Activated CD4-positive, alpha-beta T cell treated with anti-CD3 and anti-CD28 coated beads, Interleukin-2, amount 10 ng/mL, durations not matched to agents 24 days and 14 days (primary cell): ENCODE measurements at regions of chr5 and their contacts with region 1.

Region 1: GRCh38 chr5:76402886-76403765 is at the start of gene IQGAP2:
- DNase-seq: peak; percentile 96
- H3K4me3 Mint-ChIP-seq: peak within 1 kb of the TSS; percentile 95
- H3K27ac Mint-ChIP-seq: peak within 1 kb of the TSS; percentile 99
- H3K4me1 Mint-ChIP-seq: peaks cover 57% of the 10 kb centered on the region
- H3K27me3 Mint-ChIP-seq: peaks cover 7% of the 10 kb centered on the region
- total RNA-seq, gene IQGAP2: 37.3 and 39.3 TPM in 2 replicates

Region 2: GRCh38 chr5:74576941-74577456 is 1826.1 kb before region 1 on chr5:
- intact Hi-C with region 1: loop called (anchors 5 kb)
- DNase-seq: peak; percentile 79
- H3K4me3 Mint-ChIP-seq: peak overlapping the region; percentile 50
- H3K27ac Mint-ChIP-seq: peak overlapping the region; percentile 30
- H3K4me1 Mint-ChIP-seq: peaks cover 35% of the 10 kb centered on the region
- H3K27me3 Mint-ChIP-seq: peaks cover 5% of the 10 kb centered on the region

Region 3: DNA sequence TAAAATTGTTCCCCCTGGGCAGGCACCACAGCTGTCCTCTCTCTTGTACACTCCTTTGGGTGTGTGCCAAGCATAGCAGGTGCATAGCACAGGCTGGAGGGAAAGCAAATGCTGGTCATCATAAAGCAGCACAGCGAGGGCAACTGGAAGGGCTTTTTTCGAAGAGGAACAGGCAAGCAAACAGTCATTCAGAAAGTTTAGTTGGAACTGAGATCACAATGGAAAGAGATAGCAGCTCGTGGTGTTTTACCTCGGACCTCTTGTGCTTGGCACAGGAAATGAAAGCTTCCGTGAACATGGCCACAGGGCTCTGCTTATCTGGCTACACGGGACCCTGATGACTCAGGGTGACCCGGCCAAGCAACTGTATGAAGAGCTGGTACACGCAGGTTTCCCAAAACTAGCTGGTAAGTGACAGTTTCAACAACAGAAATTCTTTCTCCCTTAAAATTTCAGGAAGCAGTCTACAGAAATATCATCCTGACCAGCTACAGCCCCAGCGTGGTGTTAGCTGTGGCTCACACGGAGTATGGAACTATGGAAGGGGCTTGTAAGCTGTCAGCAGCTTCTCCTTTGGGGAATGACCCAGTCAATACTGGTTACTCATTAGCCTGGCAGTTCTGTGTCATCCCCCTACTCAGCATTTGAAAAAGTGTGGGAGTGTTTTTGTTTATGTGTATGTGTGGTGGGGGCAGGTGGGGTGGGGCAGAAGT is 734.0 kb before region 1 on chr5:
- intact Hi-C with region 1: loop called (anchors 1 kb)
- DNase-seq: peak; percentile 83
- H3K4me3 Mint-ChIP-seq: peak overlapping the region; percentile 79
- H3K27ac Mint-ChIP-seq: peak overlapping the region; percentile 95
- H3K4me1 Mint-ChIP-seq: peaks cover 36% of the 10 kb centered on the region
- H3K27me3 Mint-ChIP-seq: no peaks in the 10 kb centered on the region

Region 4: GRCh38 chr5:76331126-76331525 is 72.0 kb before region 1 on chr5:
- intact Hi-C with region 1: loop called (anchors 5 kb)
- DNase-seq: peak; percentile 84
- H3K4me3 Mint-ChIP-seq: peak overlapping the region; percentile 60
- H3K27ac Mint-ChIP-seq: peak overlapping the region; percentile 56
- H3K4me1 Mint-ChIP-seq: peaks cover 66% of the 10 kb centered on the region
- H3K27me3 Mint-ChIP-seq: no peaks in the 10 kb centered on the region

Region 5: DNA sequence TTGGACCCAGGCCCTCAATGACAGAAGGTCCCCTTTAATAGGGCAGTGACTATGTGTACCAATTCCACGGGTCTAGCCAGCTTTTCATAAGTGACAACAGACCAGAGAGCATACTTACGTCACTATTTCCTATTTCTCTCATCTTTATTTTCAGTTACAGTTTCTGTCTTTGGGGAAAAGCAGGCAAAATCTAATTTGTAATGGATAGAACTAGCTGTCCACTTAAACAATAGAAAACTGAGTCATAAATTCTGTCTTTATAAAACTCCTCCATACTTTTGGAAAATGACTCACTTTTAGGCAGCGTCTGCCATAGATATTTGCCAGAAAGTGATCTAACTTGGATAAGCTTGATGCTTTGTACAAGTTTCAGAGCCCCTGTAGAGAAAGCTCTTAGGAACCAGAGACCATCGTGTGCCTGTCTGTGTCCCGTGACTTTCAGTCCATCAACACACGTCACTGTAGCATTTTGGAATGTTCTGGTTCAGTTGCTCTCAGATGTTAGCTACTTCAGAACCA is 118.2 kb after region 1 on chr5:
- intact Hi-C with region 1: loop called (anchors 1 kb)
- DNase-seq: peak; percentile 65
- H3K4me3 Mint-ChIP-seq: peak overlapping the region; percentile 77
- H3K27ac Mint-ChIP-seq: peak overlapping the region; percentile 96
- H3K4me1 Mint-ChIP-seq: peaks cover 37% of the 10 kb centered on the region
- H3K27me3 Mint-ChIP-seq: no peaks in the 10 kb centered on the region

Region 6: DNA sequence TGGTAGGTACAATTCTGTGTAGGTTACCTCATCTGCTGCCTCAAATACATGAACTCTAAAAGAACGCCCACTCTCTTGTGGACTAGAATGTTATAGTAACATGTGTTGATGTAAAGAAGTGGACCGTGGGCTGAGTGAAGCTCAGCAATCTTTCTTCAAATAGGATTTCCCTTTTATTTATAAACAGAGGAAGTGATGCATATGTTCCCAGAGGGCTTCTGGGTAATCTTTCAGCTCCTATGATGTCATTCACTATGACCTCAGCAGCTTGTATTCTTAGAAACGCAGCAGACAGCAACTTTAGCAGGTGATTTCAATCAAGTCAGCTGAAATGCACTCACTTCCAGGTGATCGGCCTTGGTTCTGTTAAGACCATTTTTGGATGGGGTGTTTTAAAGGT is 205.7 kb after region 1 on chr5:
- intact Hi-C with region 1: loop called (anchors 5 kb)
- DNase-seq: peak; percentile 64
- H3K4me3 Mint-ChIP-seq: no peak overlapping the region
- H3K27ac Mint-ChIP-seq: peak overlapping the region; percentile 42
- H3K4me1 Mint-ChIP-seq: peaks cover 17% of the 10 kb centered on the region
- H3K27me3 Mint-ChIP-seq: no peaks in the 10 kb centered on the region

Region 7: DNA sequence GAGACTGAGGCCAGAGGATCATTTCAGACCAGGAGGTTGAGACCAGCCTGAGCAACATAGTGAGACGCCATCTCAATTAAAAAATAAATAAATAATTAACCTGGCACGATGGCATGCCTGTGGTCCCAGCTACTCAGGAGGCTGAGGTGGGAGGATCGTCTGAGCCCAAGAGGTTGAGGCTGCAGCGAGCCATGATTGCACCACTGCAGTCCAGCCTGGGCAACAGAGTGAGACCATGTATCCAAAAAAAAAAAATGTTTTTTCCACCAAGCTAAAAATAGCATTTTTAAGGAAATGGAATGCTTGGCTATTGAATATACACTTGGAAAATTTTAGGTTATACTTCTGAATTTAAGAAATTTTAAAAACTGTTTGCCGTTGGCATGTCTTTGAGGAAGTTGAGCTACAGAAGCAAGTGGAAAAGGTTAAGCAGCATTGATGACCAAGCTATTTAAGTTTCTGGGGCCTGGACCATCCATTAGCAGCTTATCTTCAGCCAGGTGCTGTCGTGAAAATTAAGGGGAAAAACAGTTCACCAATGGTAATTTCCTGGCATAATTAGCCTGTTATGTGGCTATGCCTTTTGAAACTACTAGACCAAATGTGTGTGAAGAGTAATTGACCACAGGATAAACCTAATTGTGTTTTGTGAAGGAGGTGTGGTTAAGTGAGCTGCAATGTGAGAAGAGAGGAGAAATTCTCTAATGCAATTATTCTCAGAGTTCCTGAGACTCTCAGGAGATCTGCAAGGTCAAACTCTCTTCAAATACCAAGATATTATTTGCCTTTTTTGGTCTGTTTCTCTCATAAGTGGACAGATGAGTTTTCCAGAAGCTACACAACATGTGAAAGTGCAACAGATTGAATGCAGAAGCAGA is 333.8 kb after region 1 on chr5:
- intact Hi-C with region 1: loop called (anchors 2 kb)
- DNase-seq: no peak
- H3K4me3 Mint-ChIP-seq: peak overlapping the region; percentile 17
- H3K27ac Mint-ChIP-seq: peak overlapping the region; percentile 46
- H3K4me1 Mint-ChIP-seq: peaks cover 29% of the 10 kb centered on the region
- H3K27me3 Mint-ChIP-seq: no peaks in the 10 kb centered on the region

Region 8: DNA sequence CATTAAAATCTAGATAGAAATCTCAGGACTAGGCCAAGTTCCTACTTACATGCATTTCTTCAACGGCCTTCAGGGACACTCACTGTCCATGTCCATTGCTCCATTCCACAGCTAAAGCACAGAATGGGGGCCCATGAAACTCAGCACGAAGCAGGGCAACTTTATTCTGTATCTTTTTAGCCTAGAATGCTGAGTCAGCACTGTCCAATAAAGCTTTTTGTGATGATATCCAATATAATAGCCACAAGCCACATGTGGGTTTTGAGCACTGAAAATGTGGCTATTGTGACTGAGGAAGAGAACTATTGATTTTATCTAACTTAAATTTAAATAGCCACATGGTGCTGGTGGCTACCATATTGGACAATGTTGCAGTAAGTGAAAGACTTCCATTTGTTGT is 1213.8 kb after region 1 on chr5:
- intact Hi-C with region 1: no loop called
- DNase-seq: no peak
- H3K4me3 Mint-ChIP-seq: no peak overlapping the region
- H3K27ac Mint-ChIP-seq: no peak overlapping the region
- H3K4me1 Mint-ChIP-seq: no peaks in the 10 kb centered on the region
- H3K27me3 Mint-ChIP-seq: peaks cover 18% of the 10 kb centered on the region